Common myeloid progenitor, CD34-positive (primary cell): ENCODE measurements at regions of chr4 and their contacts with region 1.

Region 1: DNA sequence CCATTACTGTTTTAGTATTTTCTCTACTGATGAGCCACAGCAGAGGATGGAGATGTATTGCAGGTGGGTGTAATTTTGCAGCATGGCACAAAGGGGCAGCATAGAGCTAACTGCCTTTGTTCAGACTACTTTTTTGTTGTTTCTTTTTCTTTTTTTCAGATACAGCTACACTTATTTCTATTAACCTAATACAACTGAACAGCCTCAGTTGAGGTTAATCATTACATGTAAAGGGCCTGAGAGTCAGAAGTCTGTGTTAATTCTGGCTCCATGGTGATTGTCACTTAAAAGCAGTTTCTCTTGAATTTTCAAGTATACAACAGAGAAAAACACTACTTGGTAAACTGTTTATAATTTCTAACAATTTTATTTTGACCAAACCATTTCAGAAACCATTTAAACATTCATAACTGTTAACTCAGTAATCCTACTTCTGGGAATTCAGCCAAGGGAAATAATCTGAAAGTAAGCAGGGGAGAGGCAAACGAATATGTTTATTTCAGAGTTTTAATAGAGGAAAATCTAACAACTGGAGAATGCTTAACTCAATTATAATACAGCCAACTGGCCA is 13.9 kb upstream of the PPEF2 start:
- DNase-seq: peak; percentile 42 to 69 (median 60)
- H3K4me3 ChIP-seq: no peak overlapping the region
- H3K27ac ChIP-seq: no peak overlapping the region
- H3K4me1 ChIP-seq: no peaks in the 10 kb centered on the region
- H3K27me3 ChIP-seq: no peaks in the 10 kb centered on the region

Region 2: DNA sequence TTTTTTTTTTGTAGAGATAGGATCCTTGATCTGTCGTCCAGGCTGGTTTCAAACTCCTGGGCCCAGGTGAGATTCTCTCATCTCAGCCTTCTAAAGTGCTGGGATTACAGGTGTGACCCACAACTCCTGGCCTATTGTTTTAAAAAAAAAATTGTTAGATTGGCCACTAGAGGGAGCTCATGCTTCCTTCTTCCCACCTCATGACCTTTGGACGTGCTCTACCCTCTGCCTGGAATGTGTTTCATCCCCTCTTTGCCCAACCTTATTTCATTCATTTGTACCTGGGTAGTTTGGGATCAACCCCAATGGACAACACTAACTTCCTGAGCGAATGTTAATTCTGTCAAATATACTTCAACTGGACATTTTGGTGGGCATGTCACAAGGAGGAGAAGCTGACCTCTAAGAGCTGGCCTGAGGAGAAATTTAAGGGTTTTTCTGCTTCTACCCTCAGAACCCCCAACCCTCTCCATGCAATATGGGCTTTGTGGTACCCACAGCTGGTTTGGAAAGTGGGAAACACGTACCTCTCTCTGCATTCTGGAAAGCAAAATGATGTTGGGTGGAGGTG is 20.3 kb before region 1 on chr4:
- CTCF ChIA-PET with region 1: interaction called, 23 read pairs
- POLR2A ChIA-PET with region 1: no interaction called
- DNase-seq: peak; percentile 47 to 64 (median 52)
- H3K4me3 ChIP-seq: no peak overlapping the region
- H3K27ac ChIP-seq: no peak overlapping the region
- H3K4me1 ChIP-seq: no peaks in the 10 kb centered on the region
- H3K27me3 ChIP-seq: no peaks in the 10 kb centered on the region

Region 3: GRCh38 chr4:75940692-75941253 is 24.6 kb after region 1 on chr4 and contains the start of gene NAAA:
- CTCF ChIA-PET with region 1: interaction called, 10 read pairs
- POLR2A ChIA-PET with region 1: no interaction called
- DNase-seq: peak; percentile 68 to 90 (median 76)
- H3K4me3 ChIP-seq: peak within 1 kb of the TSS; percentile 69 to 98 (median 94)
- H3K27ac ChIP-seq: peak within 1 kb of the TSS in 1 of 2 experiments; percentile 66
- H3K4me1 ChIP-seq: peaks cover 0 to 24% (median 7%) of the 10 kb centered on the region in 4 experiments
- H3K27me3 ChIP-seq: no peaks in the 10 kb centered on the region